ENCODE measurements at regions of chr9 and their contacts with region 1.

Region 1: GRCh38 chr9:92438900-92439526 is 14.7 kb upstream of the OMD start:
- DNase-seq: no peak
- ATAC-seq: no peak
- H3K4me3 ChIP-seq: no peak overlapping the region
- H3K27ac ChIP-seq: no peak overlapping the region
- H3K4me1 ChIP-seq: no peaks in the 10 kb centered on the region
- H3K27me3 ChIP-seq: no peaks in the 10 kb centered on the region
- CTCF ChIP-seq: peak; percentile 40

Region 2: DNA sequence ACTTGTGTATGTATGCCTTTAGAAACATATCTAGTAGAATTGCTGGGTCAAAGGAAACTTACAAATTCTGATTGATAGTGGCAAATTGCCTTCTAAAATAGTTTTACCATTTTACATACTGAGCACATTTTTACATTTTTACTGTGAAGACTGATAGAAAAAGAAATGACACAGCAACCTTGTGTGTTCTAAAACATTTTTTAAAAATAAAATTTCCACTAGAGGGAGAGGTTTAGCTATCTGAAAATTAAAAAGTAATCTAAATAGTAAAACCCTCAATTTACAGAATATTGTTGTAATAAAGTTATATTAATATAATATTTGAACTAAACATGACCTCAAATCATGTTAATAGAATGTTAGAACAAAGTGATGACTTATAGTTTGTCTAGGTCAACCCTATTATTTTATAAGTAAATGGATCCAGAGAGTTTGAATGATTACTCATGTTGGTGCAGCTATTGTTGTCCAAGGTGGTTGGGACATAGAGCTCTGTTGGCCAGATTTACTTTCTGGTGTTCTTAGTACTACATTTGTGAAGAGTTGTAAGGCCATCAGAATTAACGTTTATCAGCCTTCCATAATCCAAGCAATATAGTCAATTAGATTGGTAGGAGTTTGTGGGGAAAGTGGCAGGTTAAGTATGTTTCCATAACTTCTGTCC is 96.1 kb before region 1 on chr9:
- intact Hi-C with region 1: loop called (anchors 10 kb)
- DNase-seq: no peak
- ATAC-seq: no peak
- H3K4me3 ChIP-seq: no peak overlapping the region
- H3K27ac ChIP-seq: no peak overlapping the region
- H3K4me1 ChIP-seq: no peaks in the 10 kb centered on the region
- H3K27me3 ChIP-seq: no peaks in the 10 kb centered on the region
- CTCF ChIP-seq: peak; percentile 26

Measured in upper lobe of right lung (tissue), 1 donor.